ENCODE measurements at regions of chr2 and their contacts with region 1.

Region 1: DNA sequence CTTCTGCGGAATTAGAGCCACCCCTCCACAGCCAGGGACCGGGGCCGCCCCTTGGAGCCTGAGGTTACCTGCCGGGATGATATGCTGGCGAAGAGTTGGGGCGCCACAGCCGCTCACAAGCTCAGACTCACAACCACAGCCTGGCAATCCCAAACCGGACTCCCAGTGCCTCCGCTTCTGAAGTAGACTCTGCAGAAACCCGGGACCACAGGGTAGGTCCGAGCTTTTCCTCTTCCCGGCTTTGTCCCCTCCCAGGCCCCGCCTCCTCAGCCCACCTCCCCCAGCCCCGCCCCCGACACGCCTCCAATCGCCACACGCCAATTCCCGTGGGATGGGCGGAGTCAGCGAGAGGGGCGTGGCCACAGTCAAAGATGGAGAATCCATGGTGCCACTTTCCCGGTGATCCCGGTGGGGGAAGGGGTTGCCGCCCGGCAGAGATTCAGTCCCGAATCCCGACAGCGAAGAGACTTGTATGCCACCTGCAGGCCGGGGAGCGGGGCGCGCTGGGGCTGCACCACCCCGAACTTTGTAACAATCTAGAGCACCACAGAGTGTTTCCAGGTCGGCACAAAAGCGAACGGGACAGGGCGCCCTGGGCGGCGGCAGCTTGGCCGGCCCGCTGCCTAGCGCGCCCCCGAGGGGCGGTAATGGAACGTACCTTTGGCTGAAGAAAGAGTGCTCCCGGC is at the start of gene IDH1:
- DNase-seq: peak; percentile 87 to 91 (median 89)
- H3K4me3 ChIP-seq: peak within 1 kb of the TSS; percentile 75 to 99 (median 91)
- H3K27ac ChIP-seq: peak within 1 kb of the TSS; percentile 25 to 79
- H3K4me1 ChIP-seq: peaks cover 30 to 48% (median 41%) of the 10 kb centered on the region in 4 experiments
- H3K27me3 ChIP-seq: no peaks in the 10 kb centered on the region

Region 2: DNA sequence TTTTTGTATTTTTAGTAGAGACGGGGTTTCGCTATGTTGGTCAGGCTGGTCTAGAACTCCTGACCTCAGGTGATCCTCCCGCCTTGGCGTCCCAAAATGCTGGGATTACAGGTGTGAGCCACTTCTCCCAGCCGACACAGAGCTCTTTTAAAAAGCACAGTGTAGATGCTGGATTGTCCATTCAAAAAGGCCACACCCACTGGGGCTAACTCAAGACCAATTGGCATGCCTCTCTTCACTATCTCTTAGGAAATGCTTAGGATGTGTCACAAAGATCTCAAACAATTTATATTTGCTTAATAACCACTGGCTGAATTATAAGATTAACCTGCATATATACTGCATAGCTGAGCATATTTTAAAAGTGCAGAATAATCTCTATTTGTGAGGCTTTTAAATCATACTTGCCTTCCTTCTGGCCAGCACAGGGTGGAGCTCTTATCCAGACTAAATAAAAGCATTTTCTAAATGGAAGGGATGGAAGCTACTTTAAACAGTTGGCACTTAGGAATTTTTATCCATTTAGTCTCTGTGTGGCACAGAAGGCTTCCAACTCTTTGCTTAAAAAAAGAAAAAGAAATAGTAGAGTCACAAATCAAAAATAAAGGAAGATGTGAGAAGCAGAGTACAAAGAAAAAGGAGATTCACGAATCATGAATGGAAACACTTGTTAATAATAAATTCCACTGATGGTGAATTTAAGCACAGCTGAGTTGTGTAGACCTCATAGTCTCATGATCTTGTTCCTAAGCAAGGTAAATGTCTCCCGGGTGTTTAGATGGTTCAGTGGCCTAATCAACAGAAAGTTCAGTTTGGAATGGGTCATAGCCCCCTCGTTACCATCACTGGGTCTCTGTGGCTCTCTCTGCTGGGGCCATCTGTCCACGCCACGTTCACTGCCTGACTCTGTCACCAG is 153.0 kb before region 1 on chr2:
- CTCF ChIA-PET with region 1: interaction called, 21 read pairs
- POLR2A ChIA-PET with region 1: interaction called, 3 read pairs
- DNase-seq: peak; percentile 46 to 50 (median 48)
- H3K4me3 ChIP-seq: peak overlapping the region in 5 of 7 experiments; percentile 9 to 67 (median 23)
- H3K27ac ChIP-seq: no peak overlapping the region
- H3K4me1 ChIP-seq: peaks cover 7 to 28% (median 15%) of the 10 kb centered on the region in 4 experiments
- H3K27me3 ChIP-seq: no peaks in the 10 kb centered on the region

Region 3: DNA sequence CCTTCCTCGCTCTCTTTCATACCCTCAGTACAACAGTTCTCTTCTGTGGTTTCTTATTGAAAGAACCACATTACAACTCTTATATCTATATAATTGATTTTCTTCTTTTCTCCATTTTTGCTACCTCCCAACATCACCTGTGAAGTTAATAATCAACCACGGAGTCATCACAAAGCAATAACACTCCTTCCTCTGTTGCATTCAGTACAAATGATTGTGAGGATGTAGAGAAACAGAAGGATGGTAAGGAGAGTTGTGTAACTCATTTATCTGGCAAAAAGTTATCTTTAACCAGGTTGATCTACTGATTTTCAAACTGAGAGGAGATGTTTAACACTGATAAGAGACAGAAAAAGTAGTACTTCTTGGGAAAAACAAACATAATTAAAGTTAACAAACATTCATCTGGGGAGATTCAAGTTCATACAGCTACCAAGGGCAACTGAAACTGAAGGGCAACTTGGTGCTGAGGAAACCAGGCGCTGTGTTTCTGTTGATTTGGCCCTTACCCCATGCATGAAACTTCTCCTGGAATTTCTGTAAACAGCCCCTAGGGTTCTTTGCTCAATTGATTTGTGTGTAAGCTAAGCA is 14.3 kb before region 1 on chr2:
- CTCF ChIA-PET with region 1: interaction called, 10 read pairs
- POLR2A ChIA-PET with region 1: no interaction called
- DNase-seq: no peak
- H3K4me3 ChIP-seq: no peak overlapping the region
- H3K27ac ChIP-seq: no peak overlapping the region
- H3K4me1 ChIP-seq: no peaks in the 10 kb centered on the region
- H3K27me3 ChIP-seq: no peaks in the 10 kb centered on the region

Region 4: GRCh38 chr2:208285853-208286252 is 30.8 kb after region 1 on chr2:
- CTCF ChIA-PET with region 1: no interaction called
- POLR2A ChIA-PET with region 1: no interaction called
- DNase-seq: peak; percentile 38 to 77 (median 75)
- H3K4me3 ChIP-seq: peak overlapping the region in 2 of 7 experiments; percentile 4 to 39
- H3K27ac ChIP-seq: peak overlapping the region; percentile 64 to 79
- H3K4me1 ChIP-seq: peaks cover 4 to 12% (median 11%) of the 10 kb centered on the region in 4 experiments
- H3K27me3 ChIP-seq: no peaks in the 10 kb centered on the region